ENCODE measurements at regions of chr2 and their contacts with region 1.

Region 1: DNA sequence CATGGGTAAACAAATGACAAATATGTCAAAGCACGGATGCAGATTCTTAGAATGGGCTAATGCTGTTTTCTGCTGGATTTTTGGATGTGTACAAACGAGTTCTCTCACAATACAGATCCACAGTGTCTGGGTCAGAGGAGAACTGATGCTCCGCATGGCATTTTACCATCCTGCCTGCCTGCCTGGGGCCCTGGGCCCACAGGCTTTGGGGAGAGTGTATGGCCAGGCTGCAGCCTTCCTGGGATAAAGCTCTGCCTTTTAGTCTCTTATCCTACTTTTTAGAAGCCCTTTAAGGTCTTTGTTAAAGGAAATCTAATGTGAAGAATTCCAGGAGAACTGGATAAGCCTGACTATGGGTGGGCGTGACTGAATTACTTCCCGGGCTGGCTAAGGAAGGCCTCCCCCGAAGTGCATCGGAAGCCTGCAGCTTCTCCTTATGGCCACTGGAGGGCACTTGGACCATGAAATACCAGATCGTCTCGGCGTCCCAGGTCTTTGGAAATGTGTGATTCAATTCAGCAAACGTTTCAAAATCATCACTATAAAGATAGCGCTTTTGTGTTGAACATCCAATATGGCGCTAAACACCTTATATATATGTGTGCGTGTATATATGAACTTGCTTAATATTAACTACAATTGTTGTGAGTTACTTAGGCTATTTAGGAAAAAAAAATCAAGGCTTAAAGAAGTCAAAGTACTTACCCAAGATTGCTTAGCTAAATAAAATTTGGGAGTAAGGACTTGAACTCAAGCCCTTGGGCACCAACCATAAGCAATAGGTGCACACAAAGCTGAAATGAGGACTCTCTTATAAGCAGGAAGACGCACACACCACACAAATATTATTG is 15.2 kb upstream of the DNPEP start:
- DNase-seq: peak; percentile 69 to 80 (median 70)
- ATAC-seq: peak; percentile 36 to 58
- H3K4me3 ChIP-seq: no peak overlapping the region
- H3K27ac ChIP-seq: no peak overlapping the region
- H3K4me1 ChIP-seq: peaks cover 3% of the 10 kb centered on the region
- H3K27me3 ChIP-seq: no peaks in the 10 kb centered on the region

Region 2: GRCh38 chr2:219459460-219460311 is 56.8 kb after region 1 on chr2:
- intact Hi-C with region 1: loop called in 1 of 4 experiments (anchors 10 kb)
- DNase-seq: peak; percentile 67 to 86 (median 83)
- ATAC-seq: peak; percentile 70 to 74
- H3K4me3 ChIP-seq: no peak overlapping the region
- H3K27ac ChIP-seq: peak overlapping the region; percentile 96
- H3K4me1 ChIP-seq: peaks cover 2% of the 10 kb centered on the region
- H3K27me3 ChIP-seq: no peaks in the 10 kb centered on the region